Naive thymus-derived CD4-positive, alpha-beta T cell (primary cell): ENCODE measurements at regions of chr4 and their contacts with region 1.

Region 1: GRCh38 chr4:109815151-109816081 is at the start of gene GAR1:
- DNase-seq: peak; percentile 55 to 89 (median 86)
- ATAC-seq: peak; percentile 95
- H3K4me3 ChIP-seq: peak within 1 kb of the TSS; percentile 88
- H3K4me3 Mint-ChIP-seq: peak within 1 kb of the TSS; percentile 93 to 99 (median 98)
- H3K27ac ChIP-seq: peak within 1 kb of the TSS; percentile 95
- H3K27ac Mint-ChIP-seq: peak within 1 kb of the TSS; percentile 96 to 99 (median 98)
- H3K4me1 ChIP-seq: peaks cover 15% of the 10 kb centered on the region in 2 donors
- H3K4me1 Mint-ChIP-seq: peaks cover 28 to 54% (median 49%) of the 10 kb centered on the region in 7 donors
- H3K27me3 ChIP-seq: no peaks in the 10 kb centered on the region
- H3K27me3 Mint-ChIP-seq: no peaks in the 10 kb centered on the region
- total RNA-seq, gene GAR1: 9.5 to 24.8 (median 10.3) TPM

Region 2: DNA sequence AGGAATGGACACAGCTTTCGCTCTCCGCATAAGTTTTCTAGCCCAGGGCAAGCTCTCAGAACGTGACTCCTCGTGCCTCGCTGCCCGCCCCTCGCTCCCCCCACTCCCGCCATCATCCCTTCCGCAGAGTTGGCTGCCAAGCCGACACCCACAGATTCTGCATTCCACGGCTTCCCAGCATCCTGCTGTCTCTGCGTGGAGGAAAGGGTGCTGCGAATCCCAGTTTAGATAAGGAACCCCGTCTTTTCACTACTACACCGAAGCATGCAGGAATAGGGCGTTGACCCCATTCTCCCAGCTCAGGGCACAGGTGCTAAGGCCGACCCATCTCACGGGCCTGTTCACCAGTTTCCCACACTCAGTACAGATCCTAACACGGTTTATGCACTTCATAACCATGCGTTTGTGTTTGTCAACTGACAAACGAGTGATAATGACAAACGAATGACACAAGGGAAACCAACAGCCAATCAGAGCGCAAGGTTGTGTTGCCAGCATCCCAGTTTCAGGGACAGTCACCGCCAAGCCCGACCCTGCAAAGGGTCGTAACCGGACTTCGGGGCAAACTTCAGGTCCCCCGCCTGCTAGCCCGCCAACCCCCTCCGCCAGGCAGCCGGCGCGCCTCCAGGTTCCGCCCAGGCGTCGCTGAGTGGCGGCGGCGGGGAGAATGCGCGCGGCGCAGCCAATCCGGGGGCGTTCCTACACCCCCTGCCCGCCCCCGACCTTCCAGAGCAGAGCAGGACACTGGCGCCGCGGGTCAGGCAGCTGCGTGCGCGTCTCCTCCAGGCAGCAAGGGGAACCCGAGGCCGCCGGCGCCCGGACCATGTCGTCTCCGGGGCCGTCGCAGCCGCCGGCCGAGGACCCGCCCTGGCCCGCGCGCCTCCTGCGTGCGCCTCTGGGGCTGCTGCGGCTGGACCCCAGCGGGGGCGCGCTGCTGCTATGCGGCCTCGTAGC is 1884.3 kb before region 1 on chr4 and contains the start of gene CYP2U1:
- CTCF ChIA-PET with region 1: no interaction called
- POLR2A ChIA-PET with region 1: no interaction called
- intact Hi-C with region 1: loop called in 1 of 2 experiments (anchors 2 kb)
- DNase-seq: peak; percentile 74 to 84 (median 81)
- ATAC-seq: peak; percentile 96
- H3K4me3 ChIP-seq: peak within 1 kb of the TSS; percentile 86
- H3K4me3 Mint-ChIP-seq: peak within 1 kb of the TSS; percentile 90 to 98 (median 92)
- H3K27ac ChIP-seq: peak within 1 kb of the TSS; percentile 71
- H3K27ac Mint-ChIP-seq: peak within 1 kb of the TSS; percentile 65 to 98 (median 88)
- H3K4me1 ChIP-seq: peaks cover 8 to 12% of the 10 kb centered on the region in 2 donors
- H3K4me1 Mint-ChIP-seq: peaks cover 21 to 50% (median 35%) of the 10 kb centered on the region in 7 donors
- H3K27me3 ChIP-seq: no peaks in the 10 kb centered on the region
- H3K27me3 Mint-ChIP-seq: peaks cover 0 to 17% (median 0%) of the 10 kb centered on the region in 5 donors
- total RNA-seq, gene CYP2U1: 3.8 to 11.4 (median 5.8) TPM

Region 3: GRCh38 chr4:108650212-108651013 is 1165.0 kb before region 1 on chr4 and contains the start of gene OSTC:
- CTCF ChIA-PET with region 1: no interaction called
- POLR2A ChIA-PET with region 1: no interaction called
- intact Hi-C with region 1: loop called in 1 of 2 experiments (anchors 10 kb)
- DNase-seq: peak; percentile 88 to 95 (median 91)
- ATAC-seq: peak; percentile 94
- H3K4me3 ChIP-seq: peak within 1 kb of the TSS; percentile 98
- H3K4me3 Mint-ChIP-seq: peak within 1 kb of the TSS; percentile 90 to 99 (median 94)
- H3K27ac ChIP-seq: peak within 1 kb of the TSS; percentile 96
- H3K27ac Mint-ChIP-seq: peak within 1 kb of the TSS; percentile 89 to 99 (median 98)
- H3K4me1 ChIP-seq: peaks cover 8 to 13% of the 10 kb centered on the region in 2 donors
- H3K4me1 Mint-ChIP-seq: peaks cover 22 to 49% (median 41%) of the 10 kb centered on the region in 7 donors
- H3K27me3 ChIP-seq: no peaks in the 10 kb centered on the region
- H3K27me3 Mint-ChIP-seq: no peaks in the 10 kb centered on the region
- total RNA-seq, gene OSTC: 31.8 to 98.2 (median 55.6) TPM

Region 4: GRCh38 chr4:109559983-109560686 is 255.3 kb before region 1 on chr4 and contains the start of gene MCUB:
- CTCF ChIA-PET with region 1: no interaction called
- POLR2A ChIA-PET with region 1: interaction called, 11 read pairs
- intact Hi-C with region 1: loop called (anchors 1 kb)
- DNase-seq: peak; percentile 80 to 95 (median 93)
- ATAC-seq: peak; percentile 96
- H3K4me3 ChIP-seq: peak within 1 kb of the TSS; percentile 83
- H3K4me3 Mint-ChIP-seq: peak within 1 kb of the TSS; percentile 89 to 100 (median 98)
- H3K27ac ChIP-seq: peak within 1 kb of the TSS; percentile 96
- H3K27ac Mint-ChIP-seq: peak within 1 kb of the TSS; percentile 90 to 100 (median 98)
- H3K4me1 ChIP-seq: peaks cover 25 to 41% of the 10 kb centered on the region in 2 donors
- H3K4me1 Mint-ChIP-seq: peaks cover 34 to 76% (median 58%) of the 10 kb centered on the region in 7 donors
- H3K27me3 ChIP-seq: no peaks in the 10 kb centered on the region
- H3K27me3 Mint-ChIP-seq: no peaks in the 10 kb centered on the region
- total RNA-seq, gene MCUB: 83.4 to 177 (median 114) TPM

Region 5: DNA sequence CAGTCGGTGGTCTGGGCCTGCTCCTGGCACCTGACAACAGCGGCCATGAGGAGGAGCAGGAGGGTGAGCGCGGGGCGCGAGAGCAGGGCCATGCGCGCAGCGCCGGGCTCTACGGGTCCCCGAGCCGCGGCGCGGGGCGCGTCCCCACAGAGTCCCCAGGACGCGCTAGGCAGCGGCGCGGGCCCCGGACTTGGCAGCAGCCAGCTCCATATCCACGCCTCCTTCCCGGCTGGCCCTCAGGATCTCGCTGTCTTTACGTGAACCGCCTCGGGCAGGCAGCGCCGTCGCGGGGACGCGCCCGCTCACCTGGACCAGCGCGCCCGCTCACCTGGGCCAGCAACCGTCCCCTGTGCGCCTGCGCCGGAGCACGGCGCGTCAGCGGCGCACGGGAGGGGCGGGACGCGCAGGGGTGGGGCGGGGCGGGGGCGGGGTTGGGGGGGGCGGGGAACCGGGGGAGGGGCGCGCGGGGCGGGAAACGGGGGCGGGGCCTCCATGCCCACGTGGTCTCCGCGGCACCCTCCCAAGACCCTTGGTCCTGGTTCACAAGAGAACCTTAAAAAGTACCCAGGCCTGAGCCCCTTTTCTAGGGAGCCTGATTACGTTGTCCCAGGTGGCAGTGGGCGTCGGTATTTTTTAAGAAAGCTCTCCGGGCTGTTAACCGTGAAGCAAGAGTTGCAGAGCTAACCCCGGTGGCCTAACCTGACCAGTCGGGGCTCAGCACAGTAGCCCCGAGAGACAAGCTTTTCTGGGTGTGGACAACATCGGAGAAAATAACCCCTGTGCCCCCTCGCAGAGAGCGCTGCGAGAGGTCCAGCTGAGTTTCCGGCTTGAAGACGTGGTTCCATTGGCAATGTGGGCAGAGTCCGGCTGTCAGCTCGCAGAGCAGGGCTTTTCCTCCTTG is 85.4 kb before region 1 on chr4 and contains the start of gene PLA2G12A:
- CTCF ChIA-PET with region 1: no interaction called
- POLR2A ChIA-PET with region 1: interaction called, 3 read pairs
- intact Hi-C with region 1: loop called (anchors 1 kb)
- DNase-seq: peak; percentile 75 to 91 (median 86)
- ATAC-seq: peak; percentile 96
- H3K4me3 ChIP-seq: peak within 1 kb of the TSS; percentile 96
- H3K4me3 Mint-ChIP-seq: peak within 1 kb of the TSS; percentile 88 to 96 (median 92)
- H3K27ac ChIP-seq: peak within 1 kb of the TSS; percentile 78
- H3K27ac Mint-ChIP-seq: peak within 1 kb of the TSS; percentile 64 to 95 (median 90)
- H3K4me1 ChIP-seq: peaks cover 10 to 14% of the 10 kb centered on the region in 2 donors
- H3K4me1 Mint-ChIP-seq: peaks cover 12 to 39% (median 30%) of the 10 kb centered on the region in 7 donors
- H3K27me3 ChIP-seq: no peaks in the 10 kb centered on the region
- H3K27me3 Mint-ChIP-seq: peaks cover 0 to 4% (median 0%) of the 10 kb centered on the region in 5 donors
- total RNA-seq, gene PLA2G12A: 11.5 to 15.4 (median 14.5) TPM

Region 6: GRCh38 chr4:110087070-110087708 is 271.8 kb after region 1 on chr4:
- CTCF ChIA-PET with region 1: no interaction called
- POLR2A ChIA-PET with region 1: no interaction called
- intact Hi-C with region 1: loop called in 1 of 2 experiments (anchors 10 kb)
- DNase-seq: no peak
- ATAC-seq: no peak
- H3K4me3 ChIP-seq: no peak overlapping the region
- H3K4me3 Mint-ChIP-seq: no peak overlapping the region
- H3K27ac ChIP-seq: no peak overlapping the region
- H3K27ac Mint-ChIP-seq: peak overlapping the region in 1 of 9 donors; percentile 48
- H3K4me1 ChIP-seq: peaks cover 0 to 11% of the 10 kb centered on the region in 2 donors
- H3K4me1 Mint-ChIP-seq: peaks cover 13 to 62% (median 29%) of the 10 kb centered on the region in 7 donors
- H3K27me3 ChIP-seq: no peaks in the 10 kb centered on the region
- H3K27me3 Mint-ChIP-seq: no peaks in the 10 kb centered on the region